Head of caudate nucleus (tissue), 42 donors: ENCODE measurements at regions of chr1 and their contacts with region 1.

Region 1: GRCh38 chr1:101309334-101310311 is 72.8 kb downstream of the S1PR1 start:
- DNase-seq: peak in 41 of 42 donors; percentile 20 to 80 (median 53)

Region 2: GRCh38 chr1:101357444-101357986 is 47.9 kb after region 1 on chr1:
- intact Hi-C with region 1: loop called (anchors 5 kb)
- DNase-seq: peak in 40 of 42 donors; percentile 6 to 88 (median 66)